ENCODE measurements at regions of chr10 and their contacts with region 1.

Region 1: GRCh38 chr10:68752711-68753350 is 31.8 kb downstream of the CCAR1 start:
- DNase-seq: no peak
- H3K4me3 Mint-ChIP-seq: no peak overlapping the region
- H3K27ac Mint-ChIP-seq: no peak overlapping the region
- H3K4me1 Mint-ChIP-seq: no peaks in the 10 kb centered on the region
- H3K27me3 Mint-ChIP-seq: no peaks in the 10 kb centered on the region

Region 2: DNA sequence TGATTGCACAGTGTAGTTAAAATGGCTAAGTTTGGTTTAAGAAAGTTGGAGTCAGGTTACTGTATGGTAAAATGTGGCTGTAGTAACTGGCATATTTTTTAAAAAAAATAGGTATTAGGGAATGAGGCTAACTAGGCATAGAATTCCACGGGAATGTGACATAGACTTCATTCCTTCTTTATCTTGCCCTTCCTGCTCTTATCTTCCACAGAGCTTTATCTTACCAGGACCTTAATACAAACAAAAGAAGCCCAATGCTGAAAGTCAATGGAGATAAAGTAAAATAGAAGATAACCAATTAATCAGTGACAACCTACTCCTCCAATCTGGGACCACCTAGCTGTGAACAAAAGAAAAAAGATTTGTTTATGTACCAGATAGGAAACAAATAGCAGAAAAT is 134.6 kb before region 1 on chr10:
- CTCF ChIA-PET with region 1: no interaction called
- POLR2A ChIA-PET with region 1: no interaction called
- DNase-seq: no peak
- H3K4me3 Mint-ChIP-seq: no peak overlapping the region
- H3K27ac Mint-ChIP-seq: no peak overlapping the region
- H3K4me1 Mint-ChIP-seq: no peaks in the 10 kb centered on the region
- H3K27me3 Mint-ChIP-seq: no peaks in the 10 kb centered on the region

Region 3: DNA sequence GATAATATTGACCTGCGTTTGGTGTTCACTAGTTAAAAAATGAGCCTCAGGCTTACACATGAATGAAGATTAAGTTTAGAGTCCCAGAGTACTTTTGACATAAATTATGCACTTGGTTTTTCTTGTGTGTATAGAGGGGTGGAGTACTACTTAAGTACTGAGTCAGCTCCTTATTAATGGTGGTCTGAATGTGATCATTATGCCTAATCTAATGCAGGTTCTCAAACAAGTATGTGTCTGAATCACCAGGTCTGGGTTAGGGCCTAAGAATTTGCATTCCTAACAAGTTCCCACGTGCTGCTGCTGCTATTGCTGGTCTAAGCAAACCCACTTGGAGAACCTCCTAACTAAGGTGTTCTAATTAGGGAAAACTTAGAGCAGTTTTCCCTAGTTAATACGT is 43.8 kb after region 1 on chr10:
- CTCF ChIA-PET with region 1: interaction called, 10 read pairs
- POLR2A ChIA-PET with region 1: no interaction called
- DNase-seq: no peak
- H3K4me3 Mint-ChIP-seq: no peak overlapping the region
- H3K27ac Mint-ChIP-seq: no peak overlapping the region
- H3K4me1 Mint-ChIP-seq: no peaks in the 10 kb centered on the region
- H3K27me3 Mint-ChIP-seq: no peaks in the 10 kb centered on the region

Region 4: GRCh38 chr10:68955832-68956532 is 203.2 kb after region 1 on chr10 and contains the start of gene DDX21:
- CTCF ChIA-PET with region 1: no interaction called
- POLR2A ChIA-PET with region 1: no interaction called
- DNase-seq: peak; percentile 94
- H3K4me3 Mint-ChIP-seq: peak within 1 kb of the TSS; percentile 99
- H3K27ac Mint-ChIP-seq: peak within 1 kb of the TSS; percentile 100
- H3K4me1 Mint-ChIP-seq: peaks cover 37% of the 10 kb centered on the region
- H3K27me3 Mint-ChIP-seq: no peaks in the 10 kb centered on the region
- total RNA-seq, gene DDX21: 81.6 to 92.4 TPM

Measured in activated CD4-positive, alpha-beta T cell treated with anti-CD3 and anti-CD28 coated beads, Interleukin-2, amount 10 ng/mL, durations not matched to agents 7 days and 5 days (primary cell).